MCF 10A (cell line): ENCODE measurements at regions of chr9 and their contacts with region 1.

Region 1: GRCh38 chr9:93003552-93004407 is 54.7 kb upstream of the SUSD3 start:
- DNase-seq: peak; percentile 69
- H3K4me3 Mint-ChIP-seq: no peak overlapping the region
- H3K27ac Mint-ChIP-seq: no peak overlapping the region
- H3K4me1 Mint-ChIP-seq: no peaks in the 10 kb centered on the region
- H3K27me3 Mint-ChIP-seq: no peaks in the 10 kb centered on the region
- CTCF ChIP-seq: peak; percentile 67

Region 2: DNA sequence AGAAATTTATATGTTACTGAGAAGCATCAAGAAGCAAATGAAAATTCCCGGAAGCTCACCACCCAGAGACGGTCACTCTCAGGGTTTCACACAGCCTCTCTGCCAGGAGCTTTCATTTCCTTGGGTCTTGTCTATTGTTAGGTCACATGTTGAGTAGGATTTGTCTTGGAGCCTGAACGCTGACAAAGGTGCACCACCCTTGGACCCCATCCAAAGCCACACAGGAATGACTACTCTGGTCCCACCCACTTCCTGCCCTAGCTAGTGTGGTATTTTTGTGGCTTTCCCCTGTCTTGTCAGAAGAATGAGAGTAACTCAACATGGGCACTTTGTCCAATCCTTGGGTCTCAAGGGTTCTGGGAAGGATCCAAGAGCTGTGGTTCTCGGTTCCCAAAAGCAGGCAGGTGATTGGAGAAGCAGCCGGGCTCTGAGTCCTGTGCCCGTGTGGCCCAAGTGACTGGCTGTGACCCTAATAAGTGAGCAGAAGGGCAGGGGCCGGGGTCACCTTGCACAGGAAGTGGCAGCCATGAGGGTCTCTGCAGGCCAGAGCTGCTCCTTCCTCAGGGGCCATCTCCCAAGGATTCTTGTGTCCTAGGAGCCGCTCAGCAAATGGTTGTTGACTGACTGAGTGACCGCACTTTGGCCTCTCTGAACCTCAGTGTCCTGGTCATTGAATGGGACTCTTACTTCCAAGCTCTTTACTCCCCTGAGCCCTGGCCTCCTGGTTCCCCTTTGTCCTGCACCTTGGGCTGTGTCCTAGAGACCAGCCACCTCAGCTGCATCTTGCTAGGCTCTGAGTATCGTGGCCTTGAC is 49.5 kb before region 1 on chr9:
- CTCF ChIA-PET with region 1: interaction called, 13 read pairs
- POLR2A ChIA-PET with region 1: no interaction called
- intact Hi-C with region 1: loop called (anchors 5 kb)
- DNase-seq: peak; percentile 85
- H3K4me3 Mint-ChIP-seq: peak overlapping the region; percentile 52
- H3K27ac Mint-ChIP-seq: peak overlapping the region; percentile 71
- H3K4me1 Mint-ChIP-seq: peaks cover 21% of the 10 kb centered on the region
- H3K27me3 Mint-ChIP-seq: no peaks in the 10 kb centered on the region
- CTCF ChIP-seq: no peak

Region 3: GRCh38 chr9:92977026-92977678 is 26.6 kb before region 1 on chr9:
- CTCF ChIA-PET with region 1: no interaction called
- POLR2A ChIA-PET with region 1: no interaction called
- intact Hi-C with region 1: no loop called
- DNase-seq: no peak
- H3K4me3 Mint-ChIP-seq: no peak overlapping the region
- H3K27ac Mint-ChIP-seq: no peak overlapping the region
- H3K4me1 Mint-ChIP-seq: no peaks in the 10 kb centered on the region
- H3K27me3 Mint-ChIP-seq: no peaks in the 10 kb centered on the region
- CTCF ChIP-seq: no peak

Region 4: DNA sequence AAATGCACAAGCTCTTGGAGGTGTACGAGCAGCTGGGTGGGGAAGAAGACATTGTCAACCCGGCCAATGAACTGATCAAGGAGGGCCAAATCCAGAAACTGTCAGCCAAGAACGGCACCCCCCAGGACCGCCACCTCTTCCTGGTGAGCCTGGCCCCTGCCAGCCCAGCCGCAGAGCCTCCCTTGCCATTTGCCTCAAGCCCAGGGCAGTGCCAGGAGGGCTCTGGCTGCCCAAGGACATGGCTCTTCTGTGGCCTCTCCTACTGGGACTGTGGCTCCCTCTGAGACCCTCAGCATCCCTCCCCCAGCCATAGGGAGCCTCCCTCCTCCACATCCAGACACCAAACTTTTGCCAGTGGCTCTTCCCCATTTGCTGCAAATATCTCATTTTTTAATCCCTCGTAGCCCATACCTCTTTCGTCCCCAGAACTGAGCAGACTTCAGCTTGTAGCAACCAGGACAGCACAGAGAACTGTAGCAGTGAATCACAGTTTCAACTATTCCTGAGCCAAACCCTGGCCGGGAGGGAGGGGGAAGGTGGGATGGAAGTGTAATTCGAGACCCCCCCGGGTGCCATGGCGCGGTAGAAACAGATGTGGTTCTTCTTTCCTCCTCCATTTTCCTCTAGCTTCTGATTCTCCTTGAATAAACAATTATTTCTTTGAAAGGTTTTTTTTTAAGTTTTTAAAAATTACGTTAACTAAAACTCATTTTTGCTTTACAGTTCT is 10.2 kb after region 1 on chr9:
- CTCF ChIA-PET with region 1: interaction called, 40 read pairs
- POLR2A ChIA-PET with region 1: no interaction called
- intact Hi-C with region 1: no loop called
- DNase-seq: no peak
- H3K4me3 Mint-ChIP-seq: no peak overlapping the region
- H3K27ac Mint-ChIP-seq: no peak overlapping the region
- H3K4me1 Mint-ChIP-seq: no peaks in the 10 kb centered on the region
- H3K27me3 Mint-ChIP-seq: peaks cover 47% of the 10 kb centered on the region
- CTCF ChIP-seq: no peak